Endothelial cell of umbilical vein (primary cell): ENCODE measurements at regions of chr20 and their contacts with region 1.

Region 1: GRCh38 chr20:815914-816606 is 17.5 kb upstream of the FAM110A start:
- DNase-seq: peak; percentile 61
- H3K4me3 ChIP-seq: no peak overlapping the region
- H3K27ac ChIP-seq: no peak overlapping the region
- H3K4me1 ChIP-seq: no peaks in the 10 kb centered on the region
- H3K27me3 ChIP-seq: peaks cover 0 to 2% of the 10 kb centered on the region in 2 experiments
- CTCF ChIP-seq: peak; percentile 97
- POLR2A ChIP-seq: no peak

Region 2: DNA sequence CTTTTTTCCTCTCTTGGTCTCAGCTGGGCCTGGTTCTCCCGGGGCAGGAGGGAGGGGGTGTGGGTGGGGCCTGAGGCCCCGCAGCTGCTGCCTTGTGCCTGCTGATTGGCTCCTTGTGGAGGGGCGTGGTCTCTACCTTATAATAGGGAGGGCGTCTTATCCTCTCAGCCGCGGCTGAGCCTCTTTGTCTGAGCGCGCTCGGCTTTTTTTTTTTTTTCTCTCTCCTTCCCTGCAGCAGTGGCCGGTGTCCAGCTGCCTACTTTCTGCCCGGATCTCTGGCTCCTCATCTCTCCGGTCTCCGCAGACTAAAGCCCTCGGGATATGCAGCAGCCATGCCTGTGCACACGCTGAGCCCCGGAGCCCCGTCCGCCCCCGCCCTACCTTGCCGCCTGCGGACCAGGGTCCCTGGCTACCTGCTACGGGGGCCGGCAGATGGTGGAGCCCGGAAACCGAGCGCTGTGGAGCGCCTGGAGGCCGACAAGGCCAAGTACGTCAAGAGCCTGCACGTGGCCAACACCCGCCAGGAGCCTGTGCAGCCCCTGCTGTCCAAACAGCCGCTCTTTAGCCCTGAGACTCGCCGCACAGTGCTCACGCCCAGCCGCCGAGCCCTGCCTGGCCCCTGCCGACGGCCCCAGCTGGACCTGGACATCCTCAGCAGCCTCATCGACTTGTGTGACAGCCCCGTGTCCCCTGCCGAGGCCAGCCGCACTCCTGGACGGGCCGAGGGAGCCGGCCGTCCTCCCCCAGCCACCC is 28.6 kb after region 1 on chr20:
- CTCF ChIA-PET with region 1: interaction called, 8 read pairs
- POLR2A ChIA-PET with region 1: no interaction called
- dilution Hi-C with region 1: no loop called
- intact Hi-C with region 1: loop called (anchors 2 kb)
- DNase-seq: peak; percentile 88
- H3K4me3 ChIP-seq: peak overlapping the region in 2 of 3 experiments; percentile 11 to 29
- H3K27ac ChIP-seq: no peak overlapping the region
- H3K4me1 ChIP-seq: peaks cover 28% of the 10 kb centered on the region
- H3K27me3 ChIP-seq: no peaks in the 10 kb centered on the region
- CTCF ChIP-seq: no peak
- POLR2A ChIP-seq: no peak

Region 3: DNA sequence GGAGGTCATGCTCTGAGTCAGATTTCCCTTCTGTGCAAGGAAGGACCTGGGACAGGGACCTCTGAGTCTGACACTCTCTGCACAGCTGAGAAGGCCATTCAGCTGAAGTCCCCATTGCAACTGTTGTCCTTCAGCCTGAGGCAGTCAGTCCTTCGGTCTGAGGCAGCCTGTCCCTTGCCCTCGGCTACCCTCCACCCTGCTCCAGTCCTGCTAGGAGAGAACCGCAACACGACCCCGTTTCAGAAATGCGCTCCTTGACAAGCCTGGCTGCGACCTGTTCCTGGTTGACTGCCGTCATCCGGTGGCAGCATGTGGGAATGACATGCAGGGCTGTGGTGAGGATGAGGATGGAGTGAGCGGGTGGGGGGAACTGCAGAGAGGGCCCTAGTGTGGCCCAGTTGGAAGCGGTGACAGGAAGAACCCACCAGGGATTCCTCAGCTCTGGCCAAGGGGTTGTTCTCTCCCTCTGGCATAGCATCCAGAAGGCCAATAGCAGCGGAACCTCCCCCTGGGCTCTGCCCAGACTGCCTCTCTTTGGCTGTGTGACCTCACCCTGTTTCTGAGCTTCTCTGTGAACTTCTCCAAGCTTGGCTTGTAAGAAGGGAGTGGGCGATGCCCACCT is 140.4 kb after region 1 on chr20:
- CTCF ChIA-PET with region 1: interaction called, 441 read pairs
- POLR2A ChIA-PET with region 1: interaction called, 6 read pairs
- dilution Hi-C with region 1: no loop called
- intact Hi-C with region 1: loop called (anchors 1 kb)
- DNase-seq: peak; percentile 62
- H3K4me3 ChIP-seq: no peak overlapping the region
- H3K27ac ChIP-seq: no peak overlapping the region
- H3K4me1 ChIP-seq: no peaks in the 10 kb centered on the region
- H3K27me3 ChIP-seq: no peaks in the 10 kb centered on the region
- CTCF ChIP-seq: peak; percentile 93 to 96
- POLR2A ChIP-seq: no peak

Region 4: DNA sequence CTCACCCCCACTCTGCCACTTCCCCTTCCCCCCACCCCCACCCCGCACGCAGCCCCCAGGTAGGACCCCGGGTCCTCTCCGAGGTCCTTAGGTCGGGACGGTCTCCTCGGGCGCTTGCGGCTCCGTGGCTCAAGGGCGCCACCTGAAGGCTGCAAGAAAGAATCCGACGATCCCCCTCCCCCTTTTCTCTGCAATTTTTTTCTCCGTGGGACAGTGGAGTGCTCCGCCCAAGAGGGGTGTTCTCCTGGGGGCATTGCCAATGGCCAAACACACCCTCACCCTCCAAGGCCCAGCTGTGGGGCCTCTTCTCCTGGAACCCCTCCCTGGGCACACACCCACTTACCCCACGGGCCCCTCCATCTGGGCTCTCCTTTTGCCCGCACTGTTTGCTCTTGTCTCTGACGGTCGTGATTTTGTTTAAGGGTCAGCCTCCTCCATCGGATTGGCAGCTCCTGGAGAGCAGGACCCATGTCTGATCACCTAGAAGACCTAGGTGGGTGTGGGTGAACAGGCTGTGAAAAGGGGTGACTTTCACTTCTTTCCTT is 369.8 kb after region 1 on chr20:
- CTCF ChIA-PET with region 1: no interaction called
- POLR2A ChIA-PET with region 1: no interaction called
- dilution Hi-C with region 1: no loop called
- intact Hi-C with region 1: loop called (anchors 2 kb)
- DNase-seq: peak; percentile 48
- H3K4me3 ChIP-seq: peak overlapping the region in 1 of 3 experiments; percentile 45
- H3K27ac ChIP-seq: no peak overlapping the region
- H3K4me1 ChIP-seq: no peaks in the 10 kb centered on the region
- H3K27me3 ChIP-seq: peaks cover 14 to 31% of the 10 kb centered on the region in 2 experiments
- CTCF ChIP-seq: peak; percentile 50 to 78
- POLR2A ChIP-seq: no peak